ENCODE measurements at regions of chr2 and their contacts with region 1.

Region 1: DNA sequence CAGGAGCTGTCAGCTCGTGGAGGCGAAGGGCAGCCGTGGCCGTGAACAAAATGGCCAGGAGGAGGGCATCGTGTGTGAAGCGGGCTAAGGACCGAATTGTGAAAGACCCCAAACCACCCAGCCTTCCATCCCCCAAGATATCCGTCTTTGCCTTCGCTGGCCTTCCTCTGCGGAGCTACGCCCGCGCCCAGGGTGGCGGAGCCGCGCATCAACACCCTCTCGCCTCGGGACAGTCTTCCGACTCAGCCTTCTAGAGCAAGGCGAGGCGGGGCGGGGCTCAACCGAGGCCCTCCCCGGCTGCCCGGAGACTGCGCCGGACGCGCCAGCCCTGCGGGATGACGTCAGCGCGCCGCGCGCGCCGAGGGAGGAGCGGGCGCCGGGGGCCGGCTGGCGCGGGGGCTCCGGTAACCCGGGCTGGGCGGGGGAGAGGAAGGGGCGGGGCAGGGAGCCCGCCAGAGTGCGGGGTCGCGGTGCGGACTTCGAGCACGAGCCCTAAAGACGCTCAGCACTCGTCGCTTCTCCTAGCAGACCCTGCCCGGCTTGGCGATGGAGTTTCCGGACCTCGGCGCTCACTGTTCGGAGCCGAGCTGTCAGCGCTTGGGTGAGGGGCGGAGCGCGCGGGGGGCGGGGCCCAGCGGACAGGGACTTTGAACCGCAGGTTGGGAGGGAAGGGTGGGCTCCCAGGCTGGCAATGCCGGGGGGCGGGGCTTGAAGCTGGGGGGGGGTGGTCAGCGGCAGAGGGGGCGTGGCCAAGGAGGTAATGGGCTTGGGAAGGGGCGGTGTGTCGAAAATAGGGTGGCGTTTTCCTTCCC is at the start of gene ZFAND2B:
- DNase-seq: peak; percentile 95
- ATAC-seq: peak; percentile 98
- H3K4me3 Mint-ChIP-seq: peak within 1 kb of the TSS; percentile 86
- H3K27ac Mint-ChIP-seq: peak within 1 kb of the TSS; percentile 96
- H3K4me1 Mint-ChIP-seq: peaks cover 57% of the 10 kb centered on the region
- H3K27me3 Mint-ChIP-seq: no peaks in the 10 kb centered on the region
- total RNA-seq, gene ZFAND2B: 57.0 to 59.5 TPM

Region 2: GRCh38 chr2:219155054-219155644 is 51.5 kb before region 1 on chr2:
- CTCF ChIA-PET with region 1: interaction called, 41 read pairs
- POLR2A ChIA-PET with region 1: interaction called, 5 read pairs
- DNase-seq: peak; percentile 53
- ATAC-seq: no peak
- H3K4me3 Mint-ChIP-seq: no peak overlapping the region
- H3K27ac Mint-ChIP-seq: no peak overlapping the region
- H3K4me1 Mint-ChIP-seq: peaks cover 12% of the 10 kb centered on the region
- H3K27me3 Mint-ChIP-seq: no peaks in the 10 kb centered on the region

Region 3: GRCh38 chr2:219171231-219171651 is 35.4 kb before region 1 on chr2:
- CTCF ChIA-PET with region 1: interaction called, 49 read pairs
- POLR2A ChIA-PET with region 1: interaction called, 49 read pairs
- DNase-seq: peak; percentile 54
- ATAC-seq: peak; percentile 50
- H3K4me3 Mint-ChIP-seq: no peak overlapping the region
- H3K27ac Mint-ChIP-seq: no peak overlapping the region
- H3K4me1 Mint-ChIP-seq: peaks cover 30% of the 10 kb centered on the region
- H3K27me3 Mint-ChIP-seq: no peaks in the 10 kb centered on the region

Region 4: GRCh38 chr2:219218732-219219701 is 12.4 kb after region 1 on chr2 and contains the start of gene ABCB6:
- CTCF ChIA-PET with region 1: interaction called, 11 read pairs
- POLR2A ChIA-PET with region 1: interaction called, 9 read pairs
- DNase-seq: peak; percentile 87
- ATAC-seq: peak; percentile 77
- H3K4me3 Mint-ChIP-seq: peak within 1 kb of the TSS; percentile 77
- H3K27ac Mint-ChIP-seq: peak within 1 kb of the TSS; percentile 75
- H3K4me1 Mint-ChIP-seq: peaks cover 26% of the 10 kb centered on the region
- H3K27me3 Mint-ChIP-seq: no peaks in the 10 kb centered on the region
- total RNA-seq, gene ABCB6: 11.6 to 11.9 TPM

Region 5: DNA sequence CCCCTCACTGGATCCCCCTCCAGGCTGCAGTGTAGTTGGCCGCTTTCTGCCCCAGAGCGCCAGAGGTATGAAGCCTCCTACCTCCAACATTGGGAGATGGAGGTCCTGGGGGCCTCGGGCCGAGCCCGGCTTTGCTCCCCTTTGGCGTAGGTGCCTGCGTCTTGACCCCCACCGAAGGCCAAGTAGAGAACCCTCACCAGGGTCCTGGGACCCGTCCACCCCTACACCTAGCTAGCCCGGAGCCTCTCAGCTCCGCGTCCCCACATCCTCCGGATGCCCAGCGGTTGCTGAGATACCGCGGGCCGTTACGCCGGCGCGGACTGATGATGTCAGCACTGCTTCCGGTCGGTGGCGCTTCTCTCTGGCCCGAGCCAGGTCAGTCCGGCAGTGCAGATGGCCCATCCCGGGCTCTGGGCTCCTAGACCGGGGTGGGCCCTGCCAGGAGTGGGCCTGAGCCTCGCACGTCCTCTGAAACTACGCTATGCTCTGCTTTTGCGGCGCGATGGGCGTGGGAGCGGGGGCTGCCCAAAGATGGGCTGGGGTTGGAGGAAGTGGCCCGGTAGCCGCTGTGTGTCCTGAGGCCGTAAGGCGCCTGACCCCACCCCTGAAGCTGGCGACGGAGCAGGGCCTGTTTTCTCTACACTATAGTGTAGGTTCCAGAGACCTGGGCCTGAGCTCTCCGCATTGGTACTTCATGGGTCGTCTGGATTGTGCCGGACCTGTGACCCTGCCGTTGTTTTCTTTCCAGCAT is 38.7 kb after region 1 on chr2 and contains the starts of genes GLB1L and STK16:
- CTCF ChIA-PET with region 1: interaction called, 5 read pairs
- POLR2A ChIA-PET with region 1: interaction called, 19 read pairs
- DNase-seq: peak; percentile 92
- ATAC-seq: peak; percentile 74
- H3K4me3 Mint-ChIP-seq: peak within 1 kb of the TSS; percentile 99
- H3K27ac Mint-ChIP-seq: peak within 1 kb of the TSS; percentile 100
- H3K4me1 Mint-ChIP-seq: peaks cover 66% of the 10 kb centered on the region
- H3K27me3 Mint-ChIP-seq: no peaks in the 10 kb centered on the region
- total RNA-seq, gene GLB1L: 3.4 to 4.0 TPM
- total RNA-seq, gene STK16: 31.2 to 31.5 TPM

Measured in activated CD8-positive, alpha-beta T cell treated with anti-CD3 and anti-CD28 coated beads, Interleukin-2, amount 10 ng/mL, durations not matched to agents 7 days and 5 days (primary cell).